Ascending aorta (tissue), 2 donors: ENCODE measurements at regions of chr2 and their contacts with region 1.

Region 1: GRCh38 chr2:231706731-231707624 is 1.3 kb upstream of the PTMA start:
- DNase-seq: peak; percentile 90 to 99
- H3K4me3 ChIP-seq: peak overlapping the region; percentile 52 to 73
- H3K27ac ChIP-seq: peak overlapping the region; percentile 100
- H3K4me1 ChIP-seq: peaks cover 17 to 19% of the 10 kb centered on the region in 2 donors
- H3K27me3 ChIP-seq: no peaks in the 10 kb centered on the region
- CTCF ChIP-seq: peak; percentile 67 to 86 (median 75)

Region 2: DNA sequence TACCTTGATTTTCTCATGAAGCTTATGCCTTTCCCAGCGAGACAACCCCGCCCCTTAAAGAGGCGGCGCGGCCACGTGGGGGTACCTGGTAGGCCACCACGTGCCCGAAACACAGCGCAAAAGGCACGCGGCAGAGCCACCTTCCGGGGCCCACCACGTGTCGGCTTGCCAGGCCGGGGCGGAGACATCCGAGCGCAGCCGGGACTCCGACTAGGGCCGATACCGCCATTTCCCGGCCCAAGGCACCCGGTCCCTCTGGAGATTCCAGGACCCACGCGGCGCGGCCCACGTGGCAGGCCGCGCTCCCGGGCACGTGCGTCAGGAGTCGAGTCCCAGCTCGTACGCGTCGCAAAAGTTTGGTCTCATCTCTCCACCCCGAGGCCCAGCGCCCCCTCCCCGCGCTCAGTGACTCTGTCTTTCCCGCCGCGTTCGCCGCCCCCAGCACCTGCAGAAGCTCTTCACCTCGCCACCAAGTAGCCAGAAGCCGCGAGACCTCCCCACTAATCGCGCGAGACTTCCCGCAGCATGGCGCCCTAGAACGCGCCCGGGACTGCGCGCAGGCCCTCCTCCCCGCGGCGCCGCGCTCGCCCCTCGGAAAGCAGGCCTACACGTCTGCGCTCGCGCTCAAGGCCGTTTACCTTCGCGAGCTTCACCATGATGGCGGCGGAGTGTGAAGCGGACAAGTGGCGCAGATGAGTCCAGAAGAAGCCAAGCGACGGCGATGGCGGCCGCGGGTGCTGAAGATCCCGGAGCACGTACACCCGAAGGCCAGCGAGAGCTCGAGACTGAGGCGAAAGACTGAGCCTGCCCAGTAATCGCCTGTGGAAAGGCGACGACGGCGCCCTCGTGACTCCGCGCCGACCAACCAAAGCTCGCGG is 243.0 kb before region 1 on chr2 and contains the start of gene NCL:
- intact Hi-C with region 1: loop called (anchors 2 kb)
- DNase-seq: peak; percentile 35 to 88
- H3K4me3 ChIP-seq: peak within 1 kb of the TSS; percentile 78 to 79
- H3K27ac ChIP-seq: peak within 1 kb of the TSS; percentile 97 to 98
- H3K4me1 ChIP-seq: peaks cover 6 to 16% of the 10 kb centered on the region in 2 donors
- H3K27me3 ChIP-seq: no peaks in the 10 kb centered on the region
- CTCF ChIP-seq: no peak
- total RNA-seq, gene NCL: 136 TPM

Region 3: GRCh38 chr2:231642631-231643494 is 64.1 kb before region 1 on chr2:
- intact Hi-C with region 1: loop called (anchors 1 kb)
- DNase-seq: peak; percentile 86 to 98
- H3K4me3 ChIP-seq: peak overlapping the region; percentile 35 to 49
- H3K27ac ChIP-seq: peak overlapping the region; percentile 97 to 99
- H3K4me1 ChIP-seq: peaks cover 21 to 41% of the 10 kb centered on the region in 2 donors
- H3K27me3 ChIP-seq: no peaks in the 10 kb centered on the region
- CTCF ChIP-seq: no peak

Region 4: DNA sequence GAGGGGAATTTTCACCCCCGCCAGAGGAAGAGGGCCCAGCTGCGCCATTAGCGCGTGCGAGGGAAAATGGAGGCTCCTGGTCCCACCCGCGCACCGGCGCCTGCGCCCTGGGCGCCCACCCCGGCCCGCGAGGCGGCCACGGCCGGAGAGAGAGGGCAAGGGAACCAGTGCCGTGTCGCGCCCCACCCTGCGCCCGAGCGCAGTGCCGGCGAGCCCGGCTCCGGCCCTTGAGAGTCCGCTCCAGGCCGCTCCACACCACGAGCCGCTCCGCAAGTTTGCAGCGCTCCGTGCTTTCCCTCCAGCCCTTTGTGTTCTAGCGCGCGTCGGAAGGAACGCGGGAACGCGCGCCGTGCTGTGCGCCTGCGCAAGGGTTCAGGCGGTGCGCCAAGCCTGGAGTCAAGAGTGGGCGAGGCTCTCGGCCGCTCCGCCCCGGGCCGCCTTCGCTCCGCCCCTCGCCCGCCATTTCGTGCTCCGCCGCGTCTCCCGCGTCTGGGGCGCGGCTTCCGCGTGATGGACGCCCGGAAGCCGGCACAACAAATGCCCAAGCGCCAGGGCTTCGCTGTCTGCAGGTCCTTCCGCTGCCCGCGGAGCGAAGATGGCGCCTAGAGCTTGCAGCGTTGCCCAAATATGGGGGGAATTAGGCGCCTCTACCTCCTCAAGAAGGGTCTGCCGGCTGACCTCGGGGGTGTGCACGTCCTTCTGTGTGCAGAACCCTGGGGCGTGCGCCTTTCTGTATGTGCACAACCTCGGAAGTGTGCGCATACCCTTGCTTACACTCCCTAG is 44.8 kb before region 1 on chr2:
- intact Hi-C with region 1: loop called (anchors 1 kb)
- DNase-seq: peak; percentile 76 to 96
- H3K4me3 ChIP-seq: peak overlapping the region; percentile 53 to 63
- H3K27ac ChIP-seq: peak overlapping the region; percentile 99 to 100
- H3K4me1 ChIP-seq: peaks cover 3 to 18% of the 10 kb centered on the region in 2 donors
- H3K27me3 ChIP-seq: no peaks in the 10 kb centered on the region
- CTCF ChIP-seq: peak in 1 of 3 experiments; percentile 10

Region 5: DNA sequence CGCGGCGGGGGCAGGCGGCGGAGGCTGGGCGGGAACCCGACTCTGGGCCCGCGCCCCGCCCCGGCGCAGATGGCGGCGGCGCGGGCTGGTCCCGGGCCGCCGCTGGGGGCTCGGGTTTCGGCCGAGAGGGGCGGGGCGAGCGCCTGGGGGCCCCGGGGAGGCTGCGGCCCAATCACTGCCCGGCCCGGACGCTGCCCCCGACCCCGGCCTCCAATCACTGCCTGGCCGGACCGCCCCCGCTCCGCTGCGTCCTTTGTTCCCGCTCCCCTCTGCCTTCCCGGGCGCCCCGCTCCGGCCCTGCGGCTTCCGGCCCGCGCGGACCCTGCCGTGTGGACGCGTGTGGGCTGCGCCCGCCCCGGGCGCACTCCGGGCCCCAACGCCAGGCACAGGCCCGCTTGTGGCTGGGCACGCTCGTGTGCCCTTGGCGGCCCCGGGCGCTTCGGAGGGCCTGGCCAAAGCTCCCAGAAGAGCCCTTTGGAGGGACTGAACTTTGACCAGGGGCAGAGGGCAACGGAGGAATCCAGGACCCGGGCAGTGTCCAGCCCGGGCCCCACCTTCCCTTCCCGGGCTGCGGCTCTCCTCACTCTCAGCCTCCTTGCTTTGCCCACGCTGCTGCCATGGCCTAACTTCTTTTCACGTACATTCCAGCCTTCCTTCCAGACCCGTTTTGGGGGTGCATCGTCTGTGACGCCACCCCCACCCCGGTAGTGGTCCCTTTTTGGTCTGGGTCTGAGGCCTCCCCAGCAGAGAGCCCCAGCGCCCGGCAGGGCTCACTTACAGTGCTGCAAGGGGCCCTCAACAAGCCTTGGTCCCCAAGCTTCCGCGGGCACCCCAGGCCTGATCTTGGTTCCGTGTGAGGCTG is 25.8 kb before region 1 on chr2:
- intact Hi-C with region 1: loop called (anchors 1 kb)
- DNase-seq: peak in 1 of 2 donors; percentile 90
- H3K4me3 ChIP-seq: peak overlapping the region; percentile 54 to 64
- H3K27ac ChIP-seq: peak overlapping the region; percentile 84 to 92
- H3K4me1 ChIP-seq: peaks cover 0 to 7% of the 10 kb centered on the region in 2 donors
- H3K27me3 ChIP-seq: no peaks in the 10 kb centered on the region
- CTCF ChIP-seq: no peak